ENCODE measurements at regions of chr17 and their contacts with region 1.

Region 1: GRCh38 chr17:21275579-21276263 is 8.8 kb upstream of the MAP2K3 start:
- DNase-seq: peak; percentile 98
- ATAC-seq: peak; percentile 95
- H3K4me3 ChIP-seq: peak overlapping the region; percentile 79
- H3K27ac ChIP-seq: peak overlapping the region; percentile 56
- H3K4me1 ChIP-seq: peaks cover 27% of the 10 kb centered on the region
- H3K27me3 ChIP-seq: no peaks in the 10 kb centered on the region
- CTCF ChIP-seq: peak; percentile 12

Region 2: GRCh38 chr17:21126645-21127510 is 148.8 kb before region 1 on chr17 and contains the start of gene DHRS7B:
- intact Hi-C with region 1: loop called (anchors 10 kb)
- DNase-seq: peak; percentile 98
- ATAC-seq: peak; percentile 96
- H3K4me3 ChIP-seq: peak within 1 kb of the TSS; percentile 91
- H3K27ac ChIP-seq: peak within 1 kb of the TSS; percentile 95
- H3K4me1 ChIP-seq: peaks cover 24% of the 10 kb centered on the region
- H3K27me3 ChIP-seq: no peaks in the 10 kb centered on the region
- CTCF ChIP-seq: no peak
- total RNA-seq, gene DHRS7B: 24.7 TPM

Measured in upper lobe of right lung (tissue), 1 donor.